CD4-positive, alpha-beta memory T cell (primary cell): ENCODE measurements at regions of chr9 and their contacts with region 1.

Region 1: DNA sequence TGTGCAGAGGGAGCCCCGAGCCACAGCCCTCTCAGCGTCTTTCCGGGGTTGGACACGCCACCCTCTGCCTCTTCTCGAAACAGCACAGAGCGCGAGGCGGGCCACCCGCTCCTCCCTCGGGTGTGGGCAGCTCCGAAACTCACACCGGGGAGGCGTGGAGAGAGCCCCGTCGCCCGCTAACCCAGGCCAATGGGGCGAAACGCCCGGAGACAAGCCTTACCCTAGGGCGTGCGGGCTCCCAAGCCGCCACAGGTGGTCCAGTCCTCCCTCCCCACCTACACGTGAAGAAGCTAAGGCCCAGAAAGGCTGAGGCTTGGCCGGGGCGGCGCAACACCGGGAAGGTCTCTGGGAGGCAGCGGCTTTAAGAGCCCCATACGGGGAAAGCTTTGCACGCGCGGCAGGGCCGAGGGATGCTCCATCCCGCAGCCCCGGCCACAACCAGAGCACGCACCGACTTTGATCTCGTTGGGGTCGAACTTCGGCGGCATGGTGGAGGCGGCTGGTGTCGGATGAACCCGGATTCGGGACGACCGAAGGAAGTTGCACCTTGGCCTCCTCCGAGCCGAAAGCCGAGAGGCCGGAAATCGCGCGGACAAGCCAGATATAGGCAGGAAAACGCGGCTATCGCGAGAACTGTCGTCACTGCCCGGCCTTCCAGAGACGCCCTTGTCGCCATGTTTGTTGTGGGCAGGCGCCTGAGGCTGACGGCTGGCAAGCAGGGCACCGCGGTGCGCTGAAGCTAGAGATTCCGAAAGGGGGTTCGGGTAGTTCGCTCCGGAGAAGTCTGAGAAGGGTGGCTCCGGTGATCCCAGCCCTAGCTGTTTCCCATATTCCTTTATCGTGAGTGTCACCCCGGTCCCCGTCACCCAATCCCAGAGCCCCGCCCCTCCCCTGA is at the starts of genes LRSAM1 and RPL12:
- DNase-seq: peak; percentile 96 to 99 (median 97)
- H3K4me3 ChIP-seq: peak within 1 kb of the TSS; percentile 86 to 97
- H3K4me3 Mint-ChIP-seq: peak within 1 kb of the TSS; percentile 95 to 99 (median 96)
- H3K27ac ChIP-seq: peak within 1 kb of the TSS; percentile 83
- H3K27ac Mint-ChIP-seq: peak within 1 kb of the TSS; percentile 95 to 98 (median 96)
- H3K4me1 ChIP-seq: peaks cover 29% of the 10 kb centered on the region
- H3K4me1 Mint-ChIP-seq: peaks cover 27 to 62% (median 36%) of the 10 kb centered on the region in 4 donors
- H3K27me3 ChIP-seq: no peaks in the 10 kb centered on the region
- H3K27me3 Mint-ChIP-seq: no peaks in the 10 kb centered on the region
- total RNA-seq, gene LRSAM1: 30.5 to 31.3 TPM
- total RNA-seq, gene RPL12: 1,622 to 1,664 TPM

Region 2: GRCh38 chr9:127214421-127215267 is 236.4 kb before region 1 on chr9:
- CTCF ChIA-PET with region 1: interaction called, 8 read pairs
- POLR2A ChIA-PET with region 1: interaction called, 17 read pairs
- intact Hi-C with region 1: loop called (anchors 2 kb)
- DNase-seq: peak; percentile 51 to 71 (median 55)
- H3K4me3 ChIP-seq: no peak overlapping the region
- H3K4me3 Mint-ChIP-seq: no peak overlapping the region
- H3K27ac ChIP-seq: no peak overlapping the region
- H3K27ac Mint-ChIP-seq: peak overlapping the region in 1 of 7 donors; percentile 20
- H3K4me1 ChIP-seq: no peaks in the 10 kb centered on the region
- H3K4me1 Mint-ChIP-seq: peaks cover 0 to 6% (median 2%) of the 10 kb centered on the region in 4 donors
- H3K27me3 ChIP-seq: no peaks in the 10 kb centered on the region
- H3K27me3 Mint-ChIP-seq: peaks cover 0 to 1% of the 10 kb centered on the region in 2 donors

Region 3: GRCh38 chr9:127311239-127311741 is 139.8 kb before region 1 on chr9:
- CTCF ChIA-PET with region 1: interaction called, 6 read pairs
- POLR2A ChIA-PET with region 1: interaction called, 12 read pairs
- intact Hi-C with region 1: loop called (anchors 2 kb)
- DNase-seq: peak in 4 of 5 donors; percentile 13 to 22 (median 18)
- H3K4me3 ChIP-seq: no peak overlapping the region
- H3K4me3 Mint-ChIP-seq: no peak overlapping the region
- H3K27ac ChIP-seq: no peak overlapping the region
- H3K27ac Mint-ChIP-seq: no peak overlapping the region
- H3K4me1 ChIP-seq: no peaks in the 10 kb centered on the region
- H3K4me1 Mint-ChIP-seq: no peaks in the 10 kb centered on the region
- H3K27me3 ChIP-seq: no peaks in the 10 kb centered on the region
- H3K27me3 Mint-ChIP-seq: peaks cover 2 to 7% of the 10 kb centered on the region in 2 donors

Region 4: DNA sequence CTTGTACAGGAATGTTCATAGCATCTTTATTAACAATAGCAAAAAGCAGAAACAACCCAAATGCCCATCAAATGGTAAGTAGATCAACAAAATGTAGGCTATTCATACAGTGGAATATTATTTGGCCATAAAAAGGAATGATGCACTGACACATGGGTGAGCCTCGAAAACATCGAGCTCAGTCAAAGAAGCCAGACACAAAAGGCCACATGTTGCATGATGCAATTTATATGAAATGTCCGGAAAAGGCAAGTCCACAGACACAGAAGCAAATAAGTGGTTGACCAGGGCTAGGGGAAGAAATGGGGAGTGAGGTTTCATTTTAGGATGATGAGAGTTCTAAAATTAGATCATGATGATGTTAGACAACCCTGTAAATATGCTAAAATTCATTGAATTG is 70.6 kb before region 1 on chr9:
- CTCF ChIA-PET with region 1: no interaction called
- POLR2A ChIA-PET with region 1: no interaction called
- intact Hi-C with region 1: no loop called
- DNase-seq: no peak
- H3K4me3 ChIP-seq: no peak overlapping the region
- H3K4me3 Mint-ChIP-seq: no peak overlapping the region
- H3K27ac ChIP-seq: no peak overlapping the region
- H3K27ac Mint-ChIP-seq: no peak overlapping the region
- H3K4me1 ChIP-seq: no peaks in the 10 kb centered on the region
- H3K4me1 Mint-ChIP-seq: peaks cover 0 to 2% (median 0%) of the 10 kb centered on the region in 4 donors
- H3K27me3 ChIP-seq: peaks cover 24% of the 10 kb centered on the region
- H3K27me3 Mint-ChIP-seq: peaks cover 46 to 51% of the 10 kb centered on the region in 2 donors

Region 5: DNA sequence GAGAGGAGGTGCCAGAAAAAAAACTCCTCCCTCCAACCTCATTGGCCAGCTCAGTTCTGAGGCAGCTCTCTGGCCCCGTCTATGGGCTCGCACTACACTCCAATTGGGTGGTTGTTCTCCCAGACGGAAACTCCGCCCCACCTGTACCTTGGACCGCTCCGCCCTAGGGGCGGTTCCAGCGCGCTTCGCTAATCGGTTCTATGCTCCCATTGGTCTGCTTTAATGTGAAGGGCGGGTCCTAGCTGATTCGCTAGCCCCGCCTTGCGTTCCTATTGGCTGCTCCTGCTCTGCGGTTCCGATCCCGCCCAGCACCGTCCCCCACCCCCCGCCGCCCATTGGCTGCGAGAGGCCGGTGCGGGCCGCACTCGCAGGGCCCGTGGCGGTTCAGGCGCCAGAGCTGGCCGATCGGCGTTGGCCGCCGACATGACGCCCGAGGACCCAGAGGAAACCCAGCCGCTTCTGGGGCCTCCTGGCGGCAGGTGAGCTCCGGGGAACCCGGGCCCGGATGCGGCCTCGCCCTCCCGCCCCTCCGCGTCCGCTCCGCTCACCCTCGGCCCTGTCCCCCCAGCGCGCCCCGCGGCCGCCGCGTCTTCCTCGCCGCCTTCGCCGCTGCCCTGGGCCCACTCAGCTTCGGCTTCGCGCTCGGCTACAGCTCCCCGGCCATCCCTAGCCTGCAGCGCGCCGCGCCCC is 54.1 kb before region 1 on chr9 and contains the start of gene SLC2A8:
- CTCF ChIA-PET with region 1: interaction called, 3 read pairs
- POLR2A ChIA-PET with region 1: interaction called, 19 read pairs
- intact Hi-C with region 1: loop called (anchors 2 kb)
- DNase-seq: peak; percentile 90 to 97 (median 95)
- H3K4me3 ChIP-seq: peak within 1 kb of the TSS; percentile 3 to 45
- H3K4me3 Mint-ChIP-seq: peak within 1 kb of the TSS; percentile 57 to 87 (median 69)
- H3K27ac ChIP-seq: no peak within 1 kb of the TSS
- H3K27ac Mint-ChIP-seq: peak within 1 kb of the TSS in 3 of 7 donors; percentile 13 to 86 (median 65)
- H3K4me1 ChIP-seq: peaks cover 19% of the 10 kb centered on the region
- H3K4me1 Mint-ChIP-seq: peaks cover 5 to 23% (median 13%) of the 10 kb centered on the region in 4 donors
- H3K27me3 ChIP-seq: peaks cover 50% of the 10 kb centered on the region
- H3K27me3 Mint-ChIP-seq: peaks cover 43 to 44% of the 10 kb centered on the region in 2 donors
- total RNA-seq, gene SLC2A8: 2.1 to 2.3 TPM

Region 6: GRCh38 chr9:127423934-127424675 is 27.0 kb before region 1 on chr9 and contains the start of gene ZNF79:
- CTCF ChIA-PET with region 1: no interaction called
- POLR2A ChIA-PET with region 1: interaction called, 67 read pairs
- intact Hi-C with region 1: loop called (anchors 1 kb)
- DNase-seq: peak; percentile 87 to 90 (median 89)
- H3K4me3 ChIP-seq: peak within 1 kb of the TSS; percentile 87 to 92
- H3K4me3 Mint-ChIP-seq: peak within 1 kb of the TSS; percentile 97 to 100 (median 99)
- H3K27ac ChIP-seq: peak within 1 kb of the TSS; percentile 80
- H3K27ac Mint-ChIP-seq: peak within 1 kb of the TSS; percentile 94 to 99 (median 96)
- H3K4me1 ChIP-seq: peaks cover 46% of the 10 kb centered on the region
- H3K4me1 Mint-ChIP-seq: peaks cover 20 to 60% (median 38%) of the 10 kb centered on the region in 4 donors
- H3K27me3 ChIP-seq: no peaks in the 10 kb centered on the region
- H3K27me3 Mint-ChIP-seq: no peaks in the 10 kb centered on the region
- total RNA-seq, gene ZNF79: 22.2 to 22.5 TPM

Region 7: GRCh38 chr9:127463382-127463781 is 12.3 kb after region 1 on chr9:
- CTCF ChIA-PET with region 1: interaction called, 3 read pairs
- POLR2A ChIA-PET with region 1: interaction called, 22 read pairs
- intact Hi-C with region 1: no loop called
- DNase-seq: no peak
- H3K4me3 ChIP-seq: no peak overlapping the region
- H3K4me3 Mint-ChIP-seq: no peak overlapping the region
- H3K27ac ChIP-seq: no peak overlapping the region
- H3K27ac Mint-ChIP-seq: no peak overlapping the region
- H3K4me1 ChIP-seq: no peaks in the 10 kb centered on the region
- H3K4me1 Mint-ChIP-seq: no peaks in the 10 kb centered on the region
- H3K27me3 ChIP-seq: no peaks in the 10 kb centered on the region
- H3K27me3 Mint-ChIP-seq: no peaks in the 10 kb centered on the region

Region 8: DNA sequence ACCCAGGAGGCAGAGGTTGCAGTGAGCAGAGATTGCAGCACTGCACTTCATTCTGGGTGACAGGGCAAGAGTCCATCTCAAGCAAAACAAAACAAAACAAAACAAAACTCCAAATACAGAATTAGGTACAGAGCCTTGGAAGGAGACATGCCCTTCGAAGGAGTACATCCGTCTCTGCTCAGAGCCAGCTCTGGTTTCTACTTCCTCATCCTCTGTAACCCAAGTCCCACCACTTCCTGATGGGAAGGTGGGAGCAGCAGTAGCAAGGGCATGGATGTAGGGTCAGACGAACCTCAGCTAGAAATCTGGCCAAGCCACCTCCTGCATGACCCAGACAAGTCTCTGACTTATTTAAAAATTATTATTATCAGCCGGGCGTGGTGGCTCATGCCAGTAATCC is 144.5 kb after region 1 on chr9:
- CTCF ChIA-PET with region 1: no interaction called
- POLR2A ChIA-PET with region 1: no interaction called
- intact Hi-C with region 1: no loop called
- DNase-seq: no peak
- H3K4me3 ChIP-seq: no peak overlapping the region
- H3K4me3 Mint-ChIP-seq: no peak overlapping the region
- H3K27ac ChIP-seq: no peak overlapping the region
- H3K27ac Mint-ChIP-seq: no peak overlapping the region
- H3K4me1 ChIP-seq: no peaks in the 10 kb centered on the region
- H3K4me1 Mint-ChIP-seq: no peaks in the 10 kb centered on the region
- H3K27me3 ChIP-seq: no peaks in the 10 kb centered on the region
- H3K27me3 Mint-ChIP-seq: no peaks in the 10 kb centered on the region

Region 9: GRCh38 chr9:127715394-127716337 is 264.6 kb after region 1 on chr9 and contains the starts of genes PTRH1 and TTC16:
- CTCF ChIA-PET with region 1: no interaction called
- POLR2A ChIA-PET with region 1: interaction called, 6 read pairs
- intact Hi-C with region 1: loop called (anchors 5 kb)
- DNase-seq: peak; percentile 95 to 97 (median 96)
- H3K4me3 ChIP-seq: peak within 1 kb of the TSS; percentile 45 to 91
- H3K4me3 Mint-ChIP-seq: peak within 1 kb of the TSS; percentile 95 to 100 (median 99)
- H3K27ac ChIP-seq: peak within 1 kb of the TSS; percentile 71
- H3K27ac Mint-ChIP-seq: peak within 1 kb of the TSS; percentile 83 to 99 (median 98)
- H3K4me1 ChIP-seq: peaks cover 45% of the 10 kb centered on the region
- H3K4me1 Mint-ChIP-seq: peaks cover 26 to 41% (median 34%) of the 10 kb centered on the region in 4 donors
- H3K27me3 ChIP-seq: no peaks in the 10 kb centered on the region
- H3K27me3 Mint-ChIP-seq: no peaks in the 10 kb centered on the region
- total RNA-seq, gene PTRH1: 7.3 to 8.4 TPM
- total RNA-seq, gene TTC16: 2.5 to 2.6 TPM